ENCODE measurements at regions of chr3 and their contacts with region 1.

Region 1: DNA sequence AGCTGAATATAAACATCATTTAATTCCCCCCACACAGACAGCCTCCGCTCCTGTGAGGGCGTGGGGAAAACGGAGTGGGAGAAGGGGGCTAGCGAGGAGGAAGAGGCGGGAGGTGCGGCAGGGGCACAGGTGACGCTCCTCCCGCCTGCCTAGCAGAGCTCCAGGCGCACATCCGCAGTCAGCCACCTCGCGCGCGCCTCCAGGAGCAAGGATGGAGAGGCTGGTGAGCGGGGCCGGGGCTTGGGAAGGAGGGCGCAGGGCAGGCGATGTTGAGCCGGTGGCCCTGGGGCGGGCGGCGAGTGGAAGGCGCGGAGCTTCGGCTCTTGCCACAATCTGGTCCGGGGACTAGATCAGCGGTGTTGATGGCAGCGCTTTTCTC is at the start of gene CD200:
- DNase-seq: peak; percentile 63 to 84
- H3K4me3 ChIP-seq: peak within 1 kb of the TSS; percentile 66 to 78
- H3K27ac ChIP-seq: peak within 1 kb of the TSS; percentile 86 to 92
- H3K4me1 ChIP-seq: peaks cover 0 to 43% (median 8%) of the 10 kb centered on the region in 4 donors
- H3K27me3 ChIP-seq: no peaks in the 10 kb centered on the region
- CTCF ChIP-seq: peak in 1 of 2 experiments; percentile 16

Region 2: DNA sequence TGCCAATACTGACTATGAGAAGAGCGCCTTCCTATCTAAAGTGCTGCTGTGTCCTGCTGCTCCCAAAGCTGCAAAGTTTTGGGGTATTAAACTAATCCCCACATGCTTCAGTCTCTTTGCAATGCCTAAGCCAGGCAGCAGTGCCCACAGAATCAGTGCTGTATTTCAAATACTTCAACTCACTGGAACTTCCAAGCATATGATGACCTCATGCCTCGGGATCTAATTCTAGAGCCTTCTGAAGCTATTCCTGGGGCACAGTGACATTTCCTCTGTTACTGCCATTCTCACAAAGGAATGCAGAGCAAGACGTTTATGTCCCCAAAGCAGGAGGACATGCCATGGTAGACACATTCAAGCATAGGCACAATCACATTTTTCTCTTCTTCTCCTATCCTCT is 78.4 kb after region 1 on chr3:
- intact Hi-C with region 1: loop called (anchors 10 kb)
- DNase-seq: no peak
- H3K4me3 ChIP-seq: no peak overlapping the region
- H3K27ac ChIP-seq: peak overlapping the region; percentile 65 to 68
- H3K4me1 ChIP-seq: peaks cover 0 to 34% (median 17%) of the 10 kb centered on the region in 4 donors
- H3K27me3 ChIP-seq: no peaks in the 10 kb centered on the region
- CTCF ChIP-seq: no peak

Region 3: GRCh38 chr3:112498914-112499711 is 166.1 kb after region 1 on chr3 and contains the start of gene BTLA:
- intact Hi-C with region 1: no loop called
- DNase-seq: no peak
- H3K4me3 ChIP-seq: no peak within 1 kb of the TSS
- H3K27ac ChIP-seq: no peak within 1 kb of the TSS
- H3K4me1 ChIP-seq: no peaks in the 10 kb centered on the region
- H3K27me3 ChIP-seq: no peaks in the 10 kb centered on the region
- CTCF ChIP-seq: no peak

Measured in tibial artery (tissue), 4 donors.